Gastrocnemius medialis (tissue), 4 donors: ENCODE measurements at regions of chr6 and their contacts with region 1.

Region 1: DNA sequence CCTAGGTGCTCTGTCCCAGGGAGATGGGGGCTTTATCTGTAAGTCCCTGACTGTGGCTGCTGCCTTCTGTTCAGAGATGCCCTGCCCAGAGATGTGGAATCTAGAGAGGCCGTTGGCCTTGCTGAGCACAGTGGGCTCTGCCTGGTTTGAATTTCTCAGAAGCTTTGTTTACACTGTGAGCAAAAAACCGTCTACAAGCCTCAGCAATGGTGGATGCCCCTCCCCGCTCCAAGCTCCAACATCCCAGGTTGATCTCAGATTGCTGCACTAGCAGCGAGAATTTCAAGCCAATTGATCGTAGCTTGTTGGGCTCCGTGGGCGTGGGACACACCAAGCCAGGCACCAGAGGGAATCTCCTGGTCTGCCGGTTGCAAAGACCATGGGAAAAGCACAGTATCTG is 16.3 kb upstream of the RPP40 start:
- DNase-seq: no peak
- ATAC-seq: no peak
- H3K4me3 ChIP-seq: no peak overlapping the region
- H3K27ac ChIP-seq: no peak overlapping the region
- H3K4me1 ChIP-seq: no peaks in the 10 kb centered on the region
- H3K27me3 ChIP-seq: no peaks in the 10 kb centered on the region
- CTCF ChIP-seq: no peak
- POLR2A ChIP-seq: no peak

Region 2: GRCh38 chr6:4948781-4949450 is 71.2 kb before region 1 on chr6:
- in situ Hi-C with region 1: no loop called
- intact Hi-C with region 1: no loop called
- DNase-seq: no peak
- ATAC-seq: no peak
- H3K4me3 ChIP-seq: no peak overlapping the region
- H3K27ac ChIP-seq: no peak overlapping the region
- H3K4me1 ChIP-seq: no peaks in the 10 kb centered on the region
- H3K27me3 ChIP-seq: no peaks in the 10 kb centered on the region
- CTCF ChIP-seq: no peak
- POLR2A ChIP-seq: no peak

Region 3: DNA sequence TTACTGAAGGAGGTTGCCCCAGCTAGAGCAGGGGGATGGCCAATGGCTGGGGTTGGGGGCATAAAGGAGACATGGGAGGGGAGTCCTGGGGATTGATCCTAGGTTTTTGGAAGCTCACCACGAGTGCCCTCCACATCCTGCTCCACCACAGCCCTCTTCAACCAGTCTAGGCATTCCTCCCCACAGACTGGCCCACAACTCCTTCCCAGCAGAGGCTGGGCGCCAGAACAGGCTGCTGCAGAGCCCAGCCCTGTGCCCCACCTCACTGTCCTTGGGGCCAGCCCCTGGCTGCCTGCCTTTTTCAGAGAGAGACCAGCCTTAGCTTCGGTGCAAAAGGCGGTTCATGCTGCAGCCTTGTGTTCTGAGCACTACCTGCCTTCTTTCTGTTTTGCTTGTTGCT is 32.7 kb before region 1 on chr6:
- in situ Hi-C with region 1: no loop called
- intact Hi-C with region 1: loop called (anchors 2 kb)
- DNase-seq: no peak
- ATAC-seq: no peak
- H3K4me3 ChIP-seq: no peak overlapping the region
- H3K27ac ChIP-seq: no peak overlapping the region
- H3K4me1 ChIP-seq: no peaks in the 10 kb centered on the region
- H3K27me3 ChIP-seq: no peaks in the 10 kb centered on the region
- CTCF ChIP-seq: no peak
- POLR2A ChIP-seq: no peak